ENCODE measurements at regions of chr3 and their contacts with region 1.

Region 1: GRCh38 chr3:194315088-194315964 is 35.8 kb downstream of the CPN2 start:
- DNase-seq: peak; percentile 64 to 65
- ATAC-seq: peak; percentile 83 to 86
- H3K4me3 ChIP-seq: peak overlapping the region; percentile 34 to 54 (median 52)
- H3K27ac ChIP-seq: peak overlapping the region in 3 of 4 donors; percentile 12 to 42 (median 13)
- H3K4me1 ChIP-seq: peaks cover 9% of the 10 kb centered on the region in 2 donors
- H3K27me3 ChIP-seq: peaks cover 19 to 30% (median 20%) of the 10 kb centered on the region in 3 donors
- CTCF ChIP-seq: peak; percentile 92 to 99 (median 94)
- POLR2A ChIP-seq: no peak

Region 2: DNA sequence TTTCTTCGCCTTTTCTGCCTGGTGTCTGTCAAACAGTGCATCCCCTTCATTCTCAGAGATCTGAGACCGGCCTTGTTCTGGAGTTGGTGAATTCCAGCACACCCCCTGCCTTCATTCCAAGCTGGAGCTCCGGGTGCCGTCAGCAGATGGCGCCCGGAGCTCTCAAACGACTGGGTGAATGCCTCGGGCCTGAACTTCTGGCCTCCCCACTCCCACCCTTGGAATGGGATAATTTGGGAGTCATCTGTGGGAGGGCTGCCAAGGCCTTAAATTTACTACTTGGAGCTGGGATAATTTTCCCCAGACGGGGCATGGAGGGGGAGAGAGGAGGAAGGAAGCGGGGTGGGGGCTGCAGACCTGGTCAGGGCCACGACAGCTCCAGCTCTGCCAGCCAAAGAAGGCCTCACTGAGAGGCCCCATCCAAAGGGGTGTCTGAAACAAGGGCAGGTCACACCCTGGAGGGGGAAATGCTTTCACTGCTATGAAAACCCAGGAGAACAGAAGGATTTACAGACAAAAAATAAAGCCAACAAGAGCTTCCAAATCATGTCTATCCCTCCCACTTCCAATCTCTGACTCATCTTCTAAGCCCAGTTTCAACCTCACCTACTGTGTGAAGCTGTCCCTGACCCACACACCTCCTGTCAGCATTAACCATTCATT is 534.4 kb before region 1 on chr3:
- in situ Hi-C with region 1: loop called (anchors 5 kb)
- intact Hi-C with region 1: loop called (anchors 1 kb)
- DNase-seq: peak; percentile 32 to 46
- ATAC-seq: peak; percentile 80 to 87
- H3K4me3 ChIP-seq: no peak overlapping the region
- H3K27ac ChIP-seq: no peak overlapping the region
- H3K4me1 ChIP-seq: peaks cover 5 to 7% of the 10 kb centered on the region in 2 donors
- H3K27me3 ChIP-seq: peaks cover 0 to 19% (median 13%) of the 10 kb centered on the region in 3 donors
- CTCF ChIP-seq: peak; percentile 65 to 89 (median 77)
- POLR2A ChIP-seq: no peak

Region 3: DNA sequence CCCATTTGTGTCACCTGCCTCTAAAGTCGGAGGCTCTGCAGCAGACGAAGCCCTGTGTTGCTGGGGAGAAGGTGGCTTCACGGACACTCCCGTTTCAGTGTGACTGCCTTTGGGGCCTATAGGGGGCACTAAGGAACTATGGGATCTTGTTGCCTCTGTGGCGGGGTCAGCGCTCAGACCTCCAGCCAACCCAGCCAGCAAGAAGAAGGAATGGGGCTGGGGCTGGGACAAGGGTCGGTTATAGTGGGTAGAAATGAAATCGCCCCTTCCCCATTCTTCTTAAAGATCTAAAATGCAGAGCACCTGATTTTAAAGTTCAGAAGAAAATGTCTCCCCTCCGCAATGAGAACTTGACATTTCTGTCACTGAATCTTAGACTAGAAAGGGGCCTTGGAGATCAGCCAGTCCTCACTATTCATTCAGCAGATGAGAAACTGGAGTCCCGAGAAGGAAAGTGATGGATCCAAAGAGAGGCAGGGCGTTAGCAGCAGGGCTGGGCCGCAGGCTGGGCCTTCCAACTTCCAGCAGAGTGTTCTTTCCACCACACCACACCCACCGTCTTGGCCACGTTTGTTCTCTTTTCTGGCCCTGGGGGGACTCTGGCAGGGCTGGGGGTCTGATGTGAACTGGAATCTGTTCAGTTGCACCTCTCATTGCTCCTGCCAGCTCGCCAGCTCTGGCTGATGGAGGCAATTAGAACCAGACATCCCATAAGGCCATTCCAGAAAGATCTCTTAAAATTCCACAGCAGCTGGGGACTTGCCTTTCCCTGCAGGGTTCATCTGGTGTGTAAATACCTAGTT is 526.9 kb before region 1 on chr3:
- in situ Hi-C with region 1: loop called in 3 of 4 experiments (anchors 5 kb)
- intact Hi-C with region 1: loop called (anchors 2 kb)
- DNase-seq: peak; percentile 30 to 53
- ATAC-seq: peak; percentile 93 to 97
- H3K4me3 ChIP-seq: no peak overlapping the region
- H3K27ac ChIP-seq: no peak overlapping the region
- H3K4me1 ChIP-seq: peaks cover 7 to 8% of the 10 kb centered on the region in 2 donors
- H3K27me3 ChIP-seq: no peaks in the 10 kb centered on the region
- CTCF ChIP-seq: peak; percentile 68 to 89 (median 78)
- POLR2A ChIP-seq: no peak

Region 4: GRCh38 chr3:194070634-194071409 is 244.5 kb before region 1 on chr3:
- in situ Hi-C with region 1: loop called in 2 of 4 experiments (anchors 10 kb)
- intact Hi-C with region 1: loop called (anchors 5 kb)
- DNase-seq: peak; percentile 64 to 89
- ATAC-seq: peak; percentile 83 to 88
- H3K4me3 ChIP-seq: peak overlapping the region; percentile 48 to 74 (median 70)
- H3K27ac ChIP-seq: peak overlapping the region; percentile 81 to 91 (median 85)
- H3K4me1 ChIP-seq: peaks cover 5 to 6% of the 10 kb centered on the region in 2 donors
- H3K27me3 ChIP-seq: no peaks in the 10 kb centered on the region
- CTCF ChIP-seq: peak in 1 of 5 experiments; percentile 22
- POLR2A ChIP-seq: peak; percentile 39 to 51

Region 5: DNA sequence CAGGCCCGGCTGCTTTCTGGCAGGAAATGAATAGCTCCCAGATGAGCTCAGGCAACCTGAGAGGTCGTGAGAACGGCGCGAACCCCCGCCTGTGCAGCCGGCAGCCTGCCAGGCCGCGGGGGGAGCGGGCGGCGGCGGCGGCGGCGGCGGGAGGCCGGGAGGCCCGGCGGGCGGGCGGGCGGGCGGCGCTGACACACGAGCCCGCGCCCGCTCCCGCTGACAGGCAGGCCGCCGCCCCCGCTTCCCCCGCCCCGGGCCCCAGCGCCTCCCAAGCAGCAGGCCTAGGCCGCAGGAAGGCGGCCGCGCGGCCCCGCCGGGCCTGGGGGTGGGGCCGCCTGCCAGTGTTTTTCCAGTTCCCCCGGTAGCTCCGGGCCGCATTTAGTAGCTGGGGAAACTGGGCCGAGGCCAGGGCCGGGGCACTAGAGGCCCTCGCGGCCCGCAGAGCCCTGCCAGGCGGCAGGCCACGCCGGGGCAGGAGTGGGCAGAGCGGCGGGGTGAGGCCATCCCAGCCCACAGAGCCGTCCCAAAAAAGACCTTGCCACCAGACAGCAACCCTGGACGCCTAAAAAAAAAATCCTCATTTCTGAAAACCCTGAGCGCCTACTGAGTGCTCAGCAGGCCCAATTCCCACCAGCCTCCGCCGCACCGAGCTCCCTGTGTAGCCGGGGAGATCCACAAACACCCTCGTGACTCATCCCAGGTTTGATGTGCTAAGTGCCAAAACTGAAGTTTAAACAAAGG is 173.7 kb before region 1 on chr3:
- in situ Hi-C with region 1: loop called in 2 of 4 experiments (anchors 10 kb)
- intact Hi-C with region 1: no loop called
- DNase-seq: peak; percentile 84 to 94
- ATAC-seq: peak; percentile 57 to 61
- H3K4me3 ChIP-seq: peak overlapping the region; percentile 38 to 59 (median 50)
- H3K27ac ChIP-seq: peak overlapping the region; percentile 94 to 100 (median 98)
- H3K4me1 ChIP-seq: peaks cover 36 to 50% of the 10 kb centered on the region in 2 donors
- H3K27me3 ChIP-seq: no peaks in the 10 kb centered on the region
- CTCF ChIP-seq: peak in 1 of 5 experiments; percentile 18
- POLR2A ChIP-seq: peak; percentile 43 to 70

Region 6: GRCh38 chr3:194158922-194159439 is 156.3 kb before region 1 on chr3:
- in situ Hi-C with region 1: loop called in 1 of 4 experiments (anchors 10 kb)
- intact Hi-C with region 1: no loop called
- DNase-seq: peak; percentile 12 to 37
- ATAC-seq: peak; percentile 80 to 90
- H3K4me3 ChIP-seq: no peak overlapping the region
- H3K27ac ChIP-seq: peak overlapping the region in 2 of 4 donors; percentile 16 to 45
- H3K4me1 ChIP-seq: peaks cover 0 to 7% of the 10 kb centered on the region in 2 donors
- H3K27me3 ChIP-seq: no peaks in the 10 kb centered on the region
- CTCF ChIP-seq: no peak
- POLR2A ChIP-seq: no peak

Region 7: GRCh38 chr3:194224471-194225415 is 90.6 kb before region 1 on chr3:
- in situ Hi-C with region 1: no loop called
- intact Hi-C with region 1: no loop called
- DNase-seq: no peak
- ATAC-seq: no peak
- H3K4me3 ChIP-seq: no peak overlapping the region
- H3K27ac ChIP-seq: no peak overlapping the region
- H3K4me1 ChIP-seq: peaks cover 0 to 11% of the 10 kb centered on the region in 2 donors
- H3K27me3 ChIP-seq: peaks cover 0 to 2% (median 0%) of the 10 kb centered on the region in 3 donors
- CTCF ChIP-seq: no peak
- POLR2A ChIP-seq: no peak

Region 8: GRCh38 chr3:194277104-194277785 is 38.1 kb before region 1 on chr3:
- in situ Hi-C with region 1: no loop called
- intact Hi-C with region 1: loop called (anchors 2 kb)
- DNase-seq: peak; percentile 72 to 88
- ATAC-seq: peak; percentile 80 to 81
- H3K4me3 ChIP-seq: peak overlapping the region in 1 of 4 donors; percentile 0
- H3K27ac ChIP-seq: peak overlapping the region; percentile 78 to 88 (median 82)
- H3K4me1 ChIP-seq: peaks cover 30 to 35% of the 10 kb centered on the region in 2 donors
- H3K27me3 ChIP-seq: no peaks in the 10 kb centered on the region
- CTCF ChIP-seq: no peak
- POLR2A ChIP-seq: peak; percentile 44 to 47

Region 9: DNA sequence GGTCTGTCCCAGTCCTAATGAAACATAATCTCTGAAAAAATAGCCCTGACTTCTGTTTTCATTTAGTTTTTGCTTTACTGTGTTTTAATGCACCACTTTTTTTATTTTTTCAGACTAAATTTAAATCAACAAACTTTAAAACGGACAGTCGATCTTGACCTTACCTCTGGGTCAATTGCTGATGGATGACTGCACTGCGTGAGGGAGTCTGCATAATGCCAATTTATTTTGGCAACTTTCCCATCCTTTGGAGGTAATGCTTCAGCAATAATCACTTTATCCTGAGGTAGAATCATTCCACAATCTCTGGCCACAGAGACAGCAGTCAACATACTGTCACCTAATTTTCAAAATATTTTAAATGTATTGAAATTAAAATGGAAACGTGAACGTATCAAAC is 116.2 kb after region 1 on chr3:
- in situ Hi-C with region 1: no loop called
- intact Hi-C with region 1: no loop called
- DNase-seq: no peak
- ATAC-seq: no peak
- H3K4me3 ChIP-seq: no peak overlapping the region
- H3K27ac ChIP-seq: no peak overlapping the region
- H3K4me1 ChIP-seq: no peaks in the 10 kb centered on the region
- H3K27me3 ChIP-seq: no peaks in the 10 kb centered on the region
- CTCF ChIP-seq: no peak
- POLR2A ChIP-seq: no peak

Region 10: GRCh38 chr3:194623449-194624290 is 308.3 kb after region 1 on chr3:
- in situ Hi-C with region 1: no loop called
- intact Hi-C with region 1: no loop called
- DNase-seq: no peak
- ATAC-seq: no peak
- H3K4me3 ChIP-seq: no peak overlapping the region
- H3K27ac ChIP-seq: no peak overlapping the region
- H3K4me1 ChIP-seq: no peaks in the 10 kb centered on the region
- H3K27me3 ChIP-seq: no peaks in the 10 kb centered on the region
- CTCF ChIP-seq: no peak
- POLR2A ChIP-seq: no peak

Measured in gastrocnemius medialis (tissue), 4 donors.